Body of pancreas (tissue), 4 donors: ENCODE measurements at regions of chr20 and their contacts with region 1.

Region 1: DNA sequence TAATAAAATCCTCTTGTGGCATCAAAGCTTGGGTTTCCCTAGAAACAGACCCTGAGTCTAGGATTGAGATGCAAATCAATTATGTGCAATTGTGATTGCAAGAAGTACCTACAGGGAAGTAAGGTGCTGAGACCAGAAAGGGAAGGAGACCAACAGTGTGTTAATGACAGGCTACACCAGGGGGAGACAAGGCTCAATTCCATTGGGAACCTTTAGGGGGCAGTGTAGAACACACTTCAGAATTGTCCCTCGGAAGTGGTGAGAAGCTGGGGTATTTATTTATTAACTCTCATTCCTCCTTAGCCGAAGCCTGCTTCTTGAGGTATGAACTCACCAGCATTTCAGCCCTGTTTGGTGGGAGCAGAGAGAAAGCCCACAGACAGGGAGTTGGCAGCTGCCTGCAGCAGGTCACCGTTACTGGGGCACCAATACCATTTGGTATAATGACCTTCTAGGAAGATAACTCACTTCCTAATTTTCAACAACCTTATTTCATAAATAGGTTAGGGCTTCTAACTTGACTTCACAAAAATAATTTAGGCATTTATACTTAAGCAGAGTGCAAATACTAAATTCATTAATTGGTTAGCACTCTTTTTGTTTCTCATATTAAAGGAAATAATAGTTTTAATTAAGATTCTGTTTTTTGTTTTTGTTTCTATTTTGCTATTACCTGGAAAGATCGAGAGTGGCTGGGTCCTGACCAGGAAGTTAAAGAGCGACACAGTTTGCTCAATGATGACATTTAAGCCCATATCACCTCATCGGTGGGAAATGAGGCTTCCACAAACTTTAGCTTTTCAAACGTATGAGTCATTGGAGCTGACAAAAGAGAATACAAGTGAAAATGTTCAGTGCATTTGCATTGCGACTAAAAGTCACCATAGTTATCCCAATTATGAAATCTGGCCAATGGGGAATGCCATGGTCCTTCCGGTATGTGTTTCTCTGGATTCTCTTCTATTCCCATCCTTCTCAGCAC is 94.8 kb downstream of the BTBD3 start:
- DNase-seq: peak; percentile 68 to 73 (median 72)
- ATAC-seq: peak; percentile 99
- H3K4me3 ChIP-seq: no peak overlapping the region
- H3K27ac ChIP-seq: no peak overlapping the region
- H3K4me1 ChIP-seq: peaks cover 6% of the 10 kb centered on the region
- H3K27me3 ChIP-seq: no peaks in the 10 kb centered on the region
- CTCF ChIP-seq: peak; percentile 90 to 100 (median 99)
- POLR2A ChIP-seq: no peak

Region 2: DNA sequence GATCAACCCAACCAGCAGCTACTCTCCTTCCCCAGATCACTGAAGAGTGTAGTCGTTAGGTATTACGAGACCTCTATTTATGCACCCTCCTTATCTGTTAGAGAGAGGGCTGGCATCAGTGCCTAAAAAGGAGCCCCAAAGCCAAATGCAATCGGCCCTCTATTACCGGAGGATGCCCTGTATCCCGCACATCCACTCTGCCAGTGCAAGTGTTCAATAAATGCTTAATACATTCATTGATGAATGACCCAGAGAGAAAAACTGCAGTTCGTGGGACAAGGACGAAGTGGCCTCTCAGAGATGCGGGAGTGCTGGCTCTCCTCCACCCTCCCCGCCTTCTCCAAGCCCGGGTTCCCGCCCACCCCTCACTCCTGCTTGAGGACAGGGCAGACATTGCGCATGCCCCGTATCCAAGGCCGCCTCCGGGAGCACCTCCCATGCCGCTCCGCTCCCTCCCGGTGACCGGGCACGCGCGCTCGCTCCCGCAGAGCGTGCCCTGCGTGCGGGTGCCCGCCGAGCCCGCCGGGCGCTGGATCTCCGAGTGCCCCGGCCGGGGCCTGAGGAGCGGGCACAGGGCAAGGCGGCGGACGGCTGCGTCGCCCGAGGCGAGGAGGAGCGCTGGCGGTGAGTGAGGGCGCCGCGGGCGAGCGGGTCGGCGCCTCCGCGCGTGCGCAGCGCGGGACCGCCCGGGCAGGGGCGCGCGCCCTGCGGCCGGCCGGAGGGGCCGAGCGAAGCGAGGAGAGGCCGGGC is 122.0 kb before region 1 on chr20:
- intact Hi-C with region 1: no loop called
- DNase-seq: peak; percentile 89 to 94 (median 94)
- ATAC-seq: peak; percentile 92
- H3K4me3 ChIP-seq: peak overlapping the region in 1 of 2 donors; percentile 58
- H3K27ac ChIP-seq: peak overlapping the region; percentile 87 to 98 (median 95)
- H3K4me1 ChIP-seq: peaks cover 10% of the 10 kb centered on the region
- H3K27me3 ChIP-seq: no peaks in the 10 kb centered on the region
- CTCF ChIP-seq: peak in 3 of 7 experiments; percentile 5 to 56 (median 56)
- POLR2A ChIP-seq: peak; percentile 17 to 58 (median 37)

Region 3: GRCh38 chr20:12217382-12217781 is 204.8 kb after region 1 on chr20:
- intact Hi-C with region 1: loop called (anchors 10 kb)
- DNase-seq: no peak
- ATAC-seq: no peak
- H3K4me3 ChIP-seq: no peak overlapping the region
- H3K27ac ChIP-seq: no peak overlapping the region
- H3K4me1 ChIP-seq: no peaks in the 10 kb centered on the region
- H3K27me3 ChIP-seq: no peaks in the 10 kb centered on the region
- CTCF ChIP-seq: no peak
- POLR2A ChIP-seq: no peak